AG04449 (cell line): ENCODE measurements at regions of chr6 and their contacts with region 1.

Region 1: GRCh38 chr6:4018172-4018905 is 60.6 kb downstream of the FAM217A start:
- DNase-seq: peak; percentile 54
- H3K4me3 ChIP-seq: peak overlapping the region; percentile 93
- CTCF ChIP-seq: peak; percentile 65

Region 2: DNA sequence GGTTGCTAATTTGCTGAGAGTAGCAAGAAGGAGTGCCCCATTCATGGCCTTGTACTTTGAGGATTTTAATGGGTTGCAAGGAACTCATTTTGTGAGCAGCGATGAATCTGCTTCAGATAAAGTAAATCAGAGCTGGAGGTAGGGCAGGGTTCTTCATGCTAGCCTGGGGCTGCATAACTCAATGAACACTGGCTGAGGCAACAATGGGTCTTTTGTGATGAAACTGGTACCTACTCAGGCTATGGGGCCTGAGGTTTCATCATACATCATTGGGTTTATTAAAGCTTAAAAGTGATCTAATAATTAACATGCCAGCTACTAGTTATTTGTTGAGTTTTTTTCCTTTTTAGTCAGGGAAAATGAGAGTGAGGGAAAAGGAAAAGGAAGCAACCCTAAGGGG is 62.3 kb before region 1 on chr6:
- CTCF ChIA-PET with region 1: no interaction called
- POLR2A ChIA-PET with region 1: no interaction called
- DNase-seq: no peak
- H3K4me3 ChIP-seq: no peak overlapping the region
- CTCF ChIP-seq: no peak

Region 3: GRCh38 chr6:4032475-4032874 is 14.1 kb after region 1 on chr6:
- CTCF ChIA-PET with region 1: interaction called, 10 read pairs
- POLR2A ChIA-PET with region 1: no interaction called
- DNase-seq: no peak
- H3K4me3 ChIP-seq: no peak overlapping the region
- CTCF ChIP-seq: no peak

Region 4: DNA sequence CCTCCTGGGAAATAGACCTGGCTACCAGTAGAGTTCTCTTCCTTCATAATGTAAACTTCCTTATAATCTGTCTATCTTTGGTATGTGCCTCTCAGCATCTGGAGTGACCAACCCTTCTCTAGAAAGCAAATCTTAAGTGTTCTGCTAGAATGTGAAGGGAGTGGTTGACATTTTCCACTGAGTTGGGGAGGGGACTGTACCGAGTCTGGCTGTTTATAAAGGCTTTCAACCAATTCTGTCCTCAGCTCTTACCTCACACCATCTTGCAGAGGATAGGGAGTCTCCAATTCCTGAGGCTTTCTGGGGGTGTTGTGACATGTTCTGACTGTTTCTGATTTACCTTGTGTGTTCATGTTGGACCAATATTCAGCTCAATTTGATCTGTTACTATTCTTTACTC is 21.0 kb after region 1 on chr6:
- CTCF ChIA-PET with region 1: interaction called, 15 read pairs
- POLR2A ChIA-PET with region 1: no interaction called
- DNase-seq: no peak
- H3K4me3 ChIP-seq: no peak overlapping the region
- CTCF ChIP-seq: no peak